PC-9 (cell line): ENCODE measurements at regions of chr3 and their contacts with region 1.

Region 1: DNA sequence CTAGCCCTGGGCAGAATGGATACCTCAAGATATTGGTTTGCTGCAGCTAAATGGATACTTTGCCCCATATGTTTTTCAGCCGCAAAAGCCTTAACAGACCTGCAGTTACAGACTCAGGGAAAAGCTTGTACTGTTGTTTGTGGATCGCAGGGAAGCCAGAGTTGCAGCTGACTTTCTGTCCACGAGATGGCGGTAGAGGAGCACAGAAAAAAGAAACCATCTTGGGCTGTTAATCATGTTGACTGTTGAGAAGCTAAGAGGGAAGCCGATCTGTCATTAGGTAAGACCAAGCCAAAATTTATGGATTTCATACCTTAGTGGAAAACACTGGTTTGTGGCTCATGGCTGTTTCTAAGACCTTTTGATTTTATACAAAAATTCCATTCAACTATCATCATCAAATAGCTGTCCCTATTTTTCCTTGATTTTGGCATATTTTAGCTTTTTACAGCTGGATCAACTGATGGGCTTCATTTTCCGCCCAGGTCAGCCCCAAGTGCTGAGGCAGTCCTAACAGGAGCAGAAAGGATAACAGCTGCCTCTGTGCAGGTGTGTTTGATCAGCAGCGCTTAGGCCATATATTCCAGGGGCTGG is 205.7 kb upstream of the ZPLD1 start:
- DNase-seq: peak; percentile 77 to 87
- H3K4me3 ChIP-seq: no peak overlapping the region
- H3K27ac ChIP-seq: no peak overlapping the region
- H3K4me1 ChIP-seq: no peaks in the 10 kb centered on the region
- H3K27me3 ChIP-seq: no peaks in the 10 kb centered on the region
- CTCF ChIP-seq: peak; percentile 100

Region 2: GRCh38 chr3:101685870-101686412 is 543.2 kb before region 1 on chr3:
- CTCF ChIA-PET with region 1: interaction called, 16 read pairs
- POLR2A ChIA-PET with region 1: no interaction called
- intact Hi-C with region 1: no loop called
- DNase-seq: no peak
- H3K4me3 ChIP-seq: peak overlapping the region; percentile 78
- H3K27ac ChIP-seq: peak overlapping the region; percentile 89
- H3K4me1 ChIP-seq: peaks cover 42% of the 10 kb centered on the region
- H3K27me3 ChIP-seq: no peaks in the 10 kb centered on the region
- CTCF ChIP-seq: no peak

Region 3: DNA sequence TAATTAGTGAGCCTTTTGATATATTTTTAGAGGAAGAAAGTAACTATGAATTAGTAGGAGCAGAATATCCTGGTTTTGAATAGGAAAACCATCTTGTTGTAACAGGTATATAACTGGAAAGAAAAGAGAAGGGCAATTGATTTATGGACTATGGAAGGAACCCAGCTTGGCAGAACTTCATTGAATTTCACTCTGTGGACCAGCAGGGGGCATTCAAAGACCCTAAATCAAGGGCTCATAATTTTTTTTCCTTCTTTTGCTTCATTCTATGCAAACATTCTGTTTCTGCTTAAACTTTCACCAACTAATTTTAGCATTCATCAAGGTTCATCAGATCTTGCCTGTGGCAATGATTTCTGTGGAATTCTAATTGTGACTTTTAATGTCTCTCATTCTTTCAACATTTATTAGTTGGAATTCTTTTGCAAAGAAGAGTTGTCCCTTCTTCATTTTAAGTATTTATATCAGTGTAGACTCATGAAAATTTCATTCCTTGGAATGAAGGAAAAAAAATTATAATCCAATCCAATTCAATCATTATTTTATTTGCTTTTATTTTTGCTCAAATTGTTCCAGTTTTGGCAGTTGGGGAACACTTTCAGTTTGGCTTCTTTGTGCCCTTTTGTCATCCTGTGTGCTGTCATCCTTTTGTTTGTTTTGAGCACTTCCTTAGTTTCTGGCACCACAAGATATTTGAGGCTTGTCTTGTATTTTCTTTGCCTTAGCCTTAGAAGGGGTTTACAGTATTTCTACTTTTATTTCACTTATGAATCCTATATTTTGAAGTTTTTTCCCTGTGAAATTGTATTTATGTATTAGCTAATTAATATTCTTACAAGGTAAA is 419.8 kb before region 1 on chr3:
- CTCF ChIA-PET with region 1: interaction called, 29 read pairs
- POLR2A ChIA-PET with region 1: interaction called, 3 read pairs
- intact Hi-C with region 1: loop called (anchors 1 kb)
- DNase-seq: peak in 1 of 2 experiments; percentile 28
- H3K4me3 ChIP-seq: no peak overlapping the region
- H3K27ac ChIP-seq: no peak overlapping the region
- H3K4me1 ChIP-seq: peaks cover 10% of the 10 kb centered on the region
- H3K27me3 ChIP-seq: no peaks in the 10 kb centered on the region
- CTCF ChIP-seq: peak; percentile 94

Region 4: GRCh38 chr3:102163036-102163827 is 65.9 kb before region 1 on chr3:
- CTCF ChIA-PET with region 1: interaction called, 4 read pairs
- POLR2A ChIA-PET with region 1: no interaction called
- intact Hi-C with region 1: loop called (anchors 1 kb)
- DNase-seq: peak; percentile 84 to 100
- H3K4me3 ChIP-seq: peak overlapping the region; percentile 7; the same call in 1 of the 2 replicates
- H3K27ac ChIP-seq: peak overlapping the region; percentile 87
- H3K4me1 ChIP-seq: peaks cover 59% of the 10 kb centered on the region
- H3K27me3 ChIP-seq: no peaks in the 10 kb centered on the region
- CTCF ChIP-seq: no peak

Region 5: DNA sequence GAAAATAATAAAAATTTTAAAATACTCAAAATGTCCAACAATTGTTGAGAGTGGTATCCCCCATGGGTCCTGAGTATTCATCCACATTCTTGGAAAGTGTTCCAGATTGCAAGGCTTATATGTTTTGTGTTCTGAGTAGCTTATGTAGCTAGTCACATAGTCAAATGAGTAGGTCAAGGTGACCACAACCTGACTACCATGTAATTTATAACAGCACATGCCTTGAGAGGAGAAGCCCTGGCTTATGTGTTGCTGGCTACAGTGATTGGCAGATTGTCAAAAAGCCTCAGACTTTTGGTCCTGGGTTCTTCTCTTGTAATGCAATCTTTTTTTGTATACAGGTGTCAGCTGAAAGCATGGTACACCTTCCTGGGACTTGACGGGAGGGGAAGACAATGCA is 95.3 kb after region 1 on chr3:
- CTCF ChIA-PET with region 1: no interaction called
- POLR2A ChIA-PET with region 1: no interaction called
- intact Hi-C with region 1: no loop called
- DNase-seq: no peak
- H3K4me3 ChIP-seq: no peak overlapping the region
- H3K27ac ChIP-seq: no peak overlapping the region
- H3K4me1 ChIP-seq: no peaks in the 10 kb centered on the region
- H3K27me3 ChIP-seq: no peaks in the 10 kb centered on the region
- CTCF ChIP-seq: no peak

Region 6: DNA sequence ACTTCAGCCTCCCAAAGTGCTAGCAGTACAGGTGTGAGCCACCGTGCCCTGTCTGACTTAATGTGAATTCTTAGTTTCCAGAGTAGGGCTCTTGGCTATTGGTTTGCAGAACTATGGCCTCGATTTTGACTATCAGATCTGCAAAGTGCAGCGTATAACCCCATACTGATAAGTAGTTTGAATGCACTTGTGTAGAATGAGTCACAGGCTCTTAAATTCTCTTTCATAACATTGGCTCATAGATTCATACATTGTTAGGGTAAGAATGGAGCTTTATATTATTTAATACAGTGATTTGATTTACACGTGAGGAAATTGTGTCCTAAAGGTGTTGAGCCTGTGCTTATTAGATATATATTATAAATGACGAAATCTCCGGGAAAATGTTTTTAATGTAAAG is 315.6 kb after region 1 on chr3:
- CTCF ChIA-PET with region 1: interaction called, 24 read pairs
- POLR2A ChIA-PET with region 1: no interaction called
- intact Hi-C with region 1: no loop called
- DNase-seq: no peak
- H3K4me3 ChIP-seq: no peak overlapping the region
- H3K27ac ChIP-seq: no peak overlapping the region
- H3K4me1 ChIP-seq: no peaks in the 10 kb centered on the region
- H3K27me3 ChIP-seq: no peaks in the 10 kb centered on the region
- CTCF ChIP-seq: no peak

Region 7: DNA sequence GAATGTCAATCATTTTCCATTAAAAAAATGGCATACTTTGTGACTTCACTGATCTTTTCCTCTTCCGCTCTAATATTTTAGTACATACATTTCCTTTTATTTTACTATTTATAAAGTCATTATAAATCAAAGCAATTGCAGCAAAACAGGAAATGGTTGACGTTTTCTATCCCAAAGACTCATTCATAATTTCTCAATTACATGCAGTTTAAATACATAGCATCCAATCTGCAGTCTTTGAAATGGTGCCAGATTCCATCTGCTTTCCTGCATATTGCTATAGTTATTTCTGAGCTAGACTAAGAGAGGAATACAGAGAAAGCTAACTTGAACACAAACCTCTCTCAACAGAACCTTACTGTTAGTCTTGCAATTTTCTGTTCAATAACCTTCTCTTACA is 385.4 kb after region 1 on chr3:
- CTCF ChIA-PET with region 1: no interaction called
- POLR2A ChIA-PET with region 1: no interaction called
- intact Hi-C with region 1: no loop called
- DNase-seq: no peak
- H3K4me3 ChIP-seq: no peak overlapping the region
- H3K27ac ChIP-seq: no peak overlapping the region
- H3K4me1 ChIP-seq: no peaks in the 10 kb centered on the region
- H3K27me3 ChIP-seq: no peaks in the 10 kb centered on the region
- CTCF ChIP-seq: no peak